ENCODE measurements at regions of chr11 and their contacts with region 1.

Region 1: GRCh38 chr11:122202951-122203456 is 87.0 kb upstream of the BLID start:
- DNase-seq: peak; percentile 71 to 85
- H3K4me3 ChIP-seq: peak overlapping the region; percentile 49 to 51
- H3K27ac ChIP-seq: peak overlapping the region; percentile 78 to 81
- H3K4me1 ChIP-seq: peaks cover 0 to 12% of the 10 kb centered on the region in 2 donors
- H3K27me3 ChIP-seq: no peaks in the 10 kb centered on the region
- CTCF ChIP-seq: peak; percentile 91 to 98 (median 96)
- POLR2A ChIP-seq: no peak

Region 2: GRCh38 chr11:121655537-121656327 is 547.3 kb before region 1 on chr11:
- intact Hi-C with region 1: loop called (anchors 10 kb)
- DNase-seq: peak; percentile 95
- H3K4me3 ChIP-seq: peak overlapping the region; percentile 18 to 44
- H3K27ac ChIP-seq: peak overlapping the region; percentile 96 to 97
- H3K4me1 ChIP-seq: peaks cover 0 to 7% of the 10 kb centered on the region in 2 donors
- H3K27me3 ChIP-seq: no peaks in the 10 kb centered on the region
- CTCF ChIP-seq: peak; percentile 80 to 94 (median 89)
- POLR2A ChIP-seq: peak in 1 of 2 donors; percentile 18

Region 3: GRCh38 chr11:122108192-122108799 is 94.7 kb before region 1 on chr11:
- intact Hi-C with region 1: loop called (anchors 10 kb)
- DNase-seq: peak in 1 of 2 donors; percentile 36
- H3K4me3 ChIP-seq: no peak overlapping the region
- H3K27ac ChIP-seq: no peak overlapping the region
- H3K4me1 ChIP-seq: no peaks in the 10 kb centered on the region
- H3K27me3 ChIP-seq: no peaks in the 10 kb centered on the region
- CTCF ChIP-seq: peak; percentile 20 to 44 (median 33)
- POLR2A ChIP-seq: no peak

Region 4: GRCh38 chr11:122159173-122159721 is 43.8 kb before region 1 on chr11:
- intact Hi-C with region 1: loop called (anchors 10 kb)
- DNase-seq: peak; percentile 42 to 56
- H3K4me3 ChIP-seq: peak overlapping the region; percentile 16 to 26
- H3K27ac ChIP-seq: peak overlapping the region; percentile 87 to 93
- H3K4me1 ChIP-seq: peaks cover 0 to 6% of the 10 kb centered on the region in 2 donors
- H3K27me3 ChIP-seq: no peaks in the 10 kb centered on the region
- CTCF ChIP-seq: no peak
- POLR2A ChIP-seq: no peak

Region 5: GRCh38 chr11:122628810-122629555 is 426.0 kb after region 1 on chr11:
- intact Hi-C with region 1: no loop called
- DNase-seq: peak; percentile 34 to 49
- H3K4me3 ChIP-seq: no peak overlapping the region
- H3K27ac ChIP-seq: no peak overlapping the region
- H3K4me1 ChIP-seq: no peaks in the 10 kb centered on the region
- H3K27me3 ChIP-seq: no peaks in the 10 kb centered on the region
- CTCF ChIP-seq: peak; percentile 54 to 72 (median 64)
- POLR2A ChIP-seq: no peak

Measured in uterus (tissue), 4 donors.